ENCODE measurements at regions of chr11 and their contacts with region 1.

Region 1: DNA sequence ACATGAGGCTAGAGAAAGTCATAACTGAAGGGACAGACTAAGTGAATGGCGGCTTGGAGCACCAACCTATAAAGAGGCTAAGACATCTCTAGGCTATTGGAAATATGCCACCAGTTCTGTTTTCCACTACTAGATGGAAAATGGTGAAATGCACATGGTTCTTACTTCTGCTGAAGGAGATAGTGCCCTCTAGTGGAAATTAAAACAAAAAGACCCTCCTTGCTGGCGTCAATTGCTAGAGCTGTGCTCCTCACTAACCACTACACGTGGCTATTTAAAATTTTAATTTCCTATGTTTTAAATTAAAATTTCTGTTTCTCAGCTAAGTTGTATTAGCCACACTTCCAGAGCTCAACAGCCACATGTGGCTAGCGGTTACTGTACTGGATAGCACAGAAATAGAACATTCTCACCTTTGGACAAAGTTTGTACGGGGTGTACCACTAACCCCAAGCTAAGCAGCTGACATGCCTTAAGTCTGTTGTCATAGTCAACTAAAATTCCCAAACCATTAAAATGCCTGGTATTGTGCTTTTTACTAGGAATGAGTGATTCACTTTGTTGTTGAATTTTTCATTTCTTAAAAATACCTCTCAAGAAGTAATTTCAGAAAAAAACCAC is 34.1 kb upstream of the CALCA start:
- DNase-seq: no peak
- H3K4me3 ChIP-seq: no peak overlapping the region
- H3K27ac ChIP-seq: no peak overlapping the region
- H3K4me1 ChIP-seq: no peaks in the 10 kb centered on the region
- H3K27me3 ChIP-seq: no peaks in the 10 kb centered on the region
- CTCF ChIP-seq: peak in 2 of 3 experiments; percentile 65 to 69; a peak in 3 of 4 replicates
- EP300 ChIP-seq: no peak
- POLR2A ChIP-seq: no peak
- RAD21 ChIP-seq: peak; percentile 73 to 78

Region 2: DNA sequence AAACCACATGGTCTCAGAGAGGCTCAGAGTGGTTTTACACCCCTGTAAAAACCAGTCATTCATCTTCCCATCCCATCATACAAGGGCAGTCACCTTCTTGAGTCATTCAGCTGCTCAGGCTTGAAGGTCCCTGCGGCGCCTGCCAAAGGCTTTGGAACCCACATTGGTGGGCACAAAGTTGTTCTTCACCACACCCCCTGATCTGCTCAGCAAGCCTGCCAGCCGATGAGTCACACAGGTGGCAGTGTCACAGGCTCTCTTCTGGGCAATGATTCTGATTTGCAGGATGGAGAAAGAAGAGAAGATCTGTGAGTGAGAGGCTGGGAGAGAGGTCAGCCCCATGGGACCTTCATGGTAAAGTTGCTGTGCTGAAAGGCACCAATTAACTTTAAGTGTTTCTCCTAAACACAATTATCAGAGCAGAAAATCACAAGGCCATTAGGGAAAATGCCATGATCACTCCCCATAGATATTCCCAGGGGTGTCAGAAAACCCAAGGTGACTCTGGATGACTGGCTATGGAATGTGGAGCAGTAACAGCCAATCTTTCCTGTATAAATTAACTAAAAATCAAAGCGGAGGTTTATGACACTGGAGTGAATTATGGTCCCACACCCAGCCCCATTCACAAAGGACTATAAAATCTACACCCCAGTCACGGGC is 38.5 kb before region 1 on chr11:
- CTCF ChIA-PET with region 1: interaction called, 75 read pairs
- POLR2A ChIA-PET with region 1: interaction called, 4 read pairs
- DNase-seq: no peak
- H3K4me3 ChIP-seq: no peak overlapping the region
- H3K27ac ChIP-seq: no peak overlapping the region
- H3K4me1 ChIP-seq: peaks cover 3 to 11% (median 3%) of the 10 kb centered on the region in 4 experiments; a peak in 6 of 7 replicates
- H3K27me3 ChIP-seq: peaks cover 18 to 28% (median 22%) of the 10 kb centered on the region in 4 experiments
- CTCF ChIP-seq: no peak
- EP300 ChIP-seq: no peak
- POLR2A ChIP-seq: no peak
- RAD21 ChIP-seq: no peak

Region 3: DNA sequence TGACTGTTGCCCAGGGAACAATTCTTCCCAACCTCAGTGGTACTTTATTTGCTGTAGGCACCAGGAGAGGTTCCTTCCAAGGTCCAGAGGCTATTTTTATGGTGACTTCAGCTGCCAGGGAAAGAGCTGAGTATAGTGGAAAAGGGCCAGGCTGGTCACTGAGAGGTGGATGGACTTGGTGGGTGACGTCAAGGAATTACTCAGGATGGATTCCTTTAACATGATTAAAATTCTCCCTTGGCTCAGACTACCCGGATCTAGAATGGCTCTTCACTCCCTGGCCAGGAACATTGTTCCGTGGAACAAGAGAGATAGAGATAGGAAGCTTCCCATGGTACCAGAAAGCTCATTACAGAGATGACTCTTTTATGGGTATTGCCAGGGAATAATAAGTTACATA is 25.4 kb before region 1 on chr11:
- CTCF ChIA-PET with region 1: interaction called, 75 read pairs
- POLR2A ChIA-PET with region 1: no interaction called
- DNase-seq: no peak
- H3K4me3 ChIP-seq: no peak overlapping the region
- H3K27ac ChIP-seq: no peak overlapping the region
- H3K4me1 ChIP-seq: peaks cover 0 to 4% (median under 1%) of the 10 kb centered on the region in 4 experiments; a peak in 1 of 7 replicates
- H3K27me3 ChIP-seq: peaks cover 7 to 18% (median 11%) of the 10 kb centered on the region in 4 experiments
- CTCF ChIP-seq: no peak
- EP300 ChIP-seq: no peak
- POLR2A ChIP-seq: no peak
- RAD21 ChIP-seq: no peak

Region 4: DNA sequence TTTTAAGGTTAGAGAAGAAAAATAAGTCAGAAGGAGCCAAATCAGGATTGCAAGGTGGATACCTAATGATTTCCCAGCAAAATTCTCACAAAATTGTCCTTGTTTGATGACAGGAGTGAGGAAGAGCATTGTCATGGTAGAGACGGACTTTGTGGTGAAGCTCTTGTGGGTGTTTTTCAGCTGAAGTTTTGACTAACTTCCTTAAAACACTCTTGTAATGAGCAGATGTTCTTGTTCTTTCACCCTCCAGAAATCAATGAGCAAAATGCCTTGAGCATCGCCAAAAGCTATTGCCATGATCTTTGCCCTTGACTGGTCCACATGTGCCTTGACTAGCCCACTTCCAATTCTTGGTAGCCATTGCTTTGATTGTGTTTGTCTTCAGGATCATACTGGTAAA is 87.2 kb after region 1 on chr11:
- CTCF ChIA-PET with region 1: interaction called, 10 read pairs
- POLR2A ChIA-PET with region 1: no interaction called
- DNase-seq: no peak
- H3K4me3 ChIP-seq: no peak overlapping the region
- H3K27ac ChIP-seq: no peak overlapping the region
- H3K4me1 ChIP-seq: no peaks in the 10 kb centered on the region; a peak in 1 of 7 replicates
- H3K27me3 ChIP-seq: no peaks in the 10 kb centered on the region
- CTCF ChIP-seq: no peak
- EP300 ChIP-seq: no peak
- POLR2A ChIP-seq: no peak
- RAD21 ChIP-seq: no peak

Region 5: GRCh38 chr11:15208378-15209222 is 202.4 kb after region 1 on chr11:
- CTCF ChIA-PET with region 1: interaction called, 10 read pairs
- POLR2A ChIA-PET with region 1: no interaction called
- DNase-seq: peak; percentile 59 to 92
- H3K4me3 ChIP-seq: no peak overlapping the region
- H3K27ac ChIP-seq: no peak overlapping the region
- H3K4me1 ChIP-seq: peaks cover 0 to 2% (median 0%) of the 10 kb centered on the region in 4 experiments; a peak in 1 of 7 replicates
- H3K27me3 ChIP-seq: no peaks in the 10 kb centered on the region; a peak in 1 of 7 replicates
- CTCF ChIP-seq: peak; percentile 95 to 97 (median 95)
- EP300 ChIP-seq: no peak
- POLR2A ChIP-seq: no peak
- RAD21 ChIP-seq: peak; percentile 99 to 100